Dendritic cell treated with granulocyte-macrophage colony-stimulating factor and Interleukin-4, amounts not matched to agents 40 ng/mL and 50 ng/mL, for 4 days (primary cell): ENCODE measurements at regions of chr2 and their contacts with region 1.

Region 1: GRCh38 chr2:202911512-202912341 is at the starts of genes CARF and WDR12:
- H3K4me3 Mint-ChIP-seq: peak within 1 kb of the TSS; percentile 98
- H3K27ac Mint-ChIP-seq: peak within 1 kb of the TSS; percentile 87
- H3K4me1 Mint-ChIP-seq: peaks cover 23% of the 10 kb centered on the region
- H3K27me3 Mint-ChIP-seq: no peaks in the 10 kb centered on the region

Region 2: GRCh38 chr2:202375609-202376408 is 535.9 kb before region 1 on chr2 and contains the start of gene BMPR2:
- intact Hi-C with region 1: loop called (anchors 5 kb)
- H3K4me3 Mint-ChIP-seq: peak within 1 kb of the TSS; percentile 88
- H3K27ac Mint-ChIP-seq: peak within 1 kb of the TSS; percentile 94
- H3K4me1 Mint-ChIP-seq: peaks cover 19% of the 10 kb centered on the region
- H3K27me3 Mint-ChIP-seq: peaks cover 9% of the 10 kb centered on the region

Region 3: GRCh38 chr2:202815548-202816360 is 96.0 kb before region 1 on chr2:
- intact Hi-C with region 1: no loop called
- H3K4me3 Mint-ChIP-seq: no peak overlapping the region
- H3K27ac Mint-ChIP-seq: no peak overlapping the region
- H3K4me1 Mint-ChIP-seq: no peaks in the 10 kb centered on the region
- H3K27me3 Mint-ChIP-seq: no peaks in the 10 kb centered on the region

Region 4: DNA sequence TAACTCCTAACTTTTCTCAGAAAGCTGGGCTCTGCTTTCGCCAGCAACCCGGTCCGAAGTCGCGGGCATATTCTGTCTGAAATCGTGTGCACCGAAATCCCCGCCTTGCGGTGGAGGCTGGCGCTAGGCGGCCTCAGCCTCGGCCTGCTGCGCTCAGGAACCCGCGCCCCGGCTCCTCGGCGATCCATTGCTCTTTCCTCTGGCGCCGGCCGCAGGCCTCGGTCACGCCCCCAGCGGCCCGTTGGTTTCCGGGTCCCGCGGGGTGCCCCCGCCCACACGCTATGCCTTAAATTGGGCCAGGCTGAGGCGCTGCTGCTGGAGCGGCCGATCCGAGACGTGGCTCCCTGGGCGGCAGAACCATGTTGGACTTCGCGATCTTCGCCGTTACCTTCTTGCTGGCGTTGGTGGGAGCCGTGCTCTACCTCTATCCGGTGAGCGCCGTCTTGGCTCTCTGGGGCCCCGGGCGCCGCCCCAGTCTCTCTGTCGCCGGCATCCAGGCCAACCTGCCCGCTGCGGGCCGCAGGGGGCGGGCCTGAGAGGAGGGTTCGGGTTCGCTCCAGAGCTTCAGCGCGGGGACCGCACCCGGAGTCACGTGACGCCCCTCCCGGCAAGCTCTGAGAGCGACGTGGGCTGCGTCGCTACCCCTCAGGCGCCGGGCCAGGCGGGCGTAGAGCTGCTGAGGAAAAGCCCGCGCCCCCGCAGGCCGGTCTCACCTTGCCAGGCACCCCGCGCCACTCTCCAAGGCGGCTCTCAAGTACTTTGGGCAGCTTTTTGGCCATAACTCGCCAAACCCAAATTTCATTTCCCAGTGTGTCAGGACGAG is 327.2 kb after region 1 on chr2 and contains the start of gene CYP20A1:
- intact Hi-C with region 1: loop called (anchors 5 kb)
- H3K4me3 Mint-ChIP-seq: peak within 1 kb of the TSS; percentile 85
- H3K27ac Mint-ChIP-seq: peak within 1 kb of the TSS; percentile 85
- H3K4me1 Mint-ChIP-seq: peaks cover 16% of the 10 kb centered on the region
- H3K27me3 Mint-ChIP-seq: no peaks in the 10 kb centered on the region